ENCODE measurements at regions of chr1 and their contacts with region 1.

Region 1: DNA sequence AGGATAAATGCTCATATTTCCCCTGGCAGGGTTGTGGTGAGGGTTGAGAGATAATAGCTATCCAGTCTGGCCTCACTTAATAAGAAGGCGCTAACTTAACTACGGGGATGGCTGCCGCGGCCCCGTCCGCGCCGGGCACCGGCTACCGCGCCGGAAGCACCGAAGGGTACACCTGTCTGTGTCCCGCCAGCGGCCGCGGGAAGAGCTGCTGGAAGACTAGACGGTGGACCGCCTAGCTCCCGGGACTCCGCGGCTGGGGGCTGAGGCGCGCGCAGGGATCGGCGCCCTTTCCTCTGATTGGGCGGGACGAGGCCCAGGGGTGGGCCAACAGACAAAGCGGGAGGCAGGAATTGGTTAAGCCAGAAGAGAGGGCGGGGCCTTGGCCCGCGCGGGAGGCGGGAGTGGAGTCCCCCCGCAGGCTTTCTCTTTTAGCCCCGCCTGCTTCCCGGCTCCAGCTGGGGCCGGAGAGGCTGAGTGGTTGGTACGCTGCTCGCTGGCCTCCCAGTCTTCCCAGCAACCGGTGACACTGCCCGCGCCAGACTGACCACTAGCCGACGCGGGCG is at the start of gene ZNF672:
- DNase-seq: peak; percentile 93
- H3K4me3 Mint-ChIP-seq: no peak within 1 kb of the TSS
- H3K27ac Mint-ChIP-seq: peak within 1 kb of the TSS; percentile 90
- H3K4me1 Mint-ChIP-seq: peaks cover 21% of the 10 kb centered on the region
- H3K27me3 Mint-ChIP-seq: peaks cover 2% of the 10 kb centered on the region
- total RNA-seq, gene ZNF672: 46.0 and 51.6 TPM in 2 replicates

Region 2: DNA sequence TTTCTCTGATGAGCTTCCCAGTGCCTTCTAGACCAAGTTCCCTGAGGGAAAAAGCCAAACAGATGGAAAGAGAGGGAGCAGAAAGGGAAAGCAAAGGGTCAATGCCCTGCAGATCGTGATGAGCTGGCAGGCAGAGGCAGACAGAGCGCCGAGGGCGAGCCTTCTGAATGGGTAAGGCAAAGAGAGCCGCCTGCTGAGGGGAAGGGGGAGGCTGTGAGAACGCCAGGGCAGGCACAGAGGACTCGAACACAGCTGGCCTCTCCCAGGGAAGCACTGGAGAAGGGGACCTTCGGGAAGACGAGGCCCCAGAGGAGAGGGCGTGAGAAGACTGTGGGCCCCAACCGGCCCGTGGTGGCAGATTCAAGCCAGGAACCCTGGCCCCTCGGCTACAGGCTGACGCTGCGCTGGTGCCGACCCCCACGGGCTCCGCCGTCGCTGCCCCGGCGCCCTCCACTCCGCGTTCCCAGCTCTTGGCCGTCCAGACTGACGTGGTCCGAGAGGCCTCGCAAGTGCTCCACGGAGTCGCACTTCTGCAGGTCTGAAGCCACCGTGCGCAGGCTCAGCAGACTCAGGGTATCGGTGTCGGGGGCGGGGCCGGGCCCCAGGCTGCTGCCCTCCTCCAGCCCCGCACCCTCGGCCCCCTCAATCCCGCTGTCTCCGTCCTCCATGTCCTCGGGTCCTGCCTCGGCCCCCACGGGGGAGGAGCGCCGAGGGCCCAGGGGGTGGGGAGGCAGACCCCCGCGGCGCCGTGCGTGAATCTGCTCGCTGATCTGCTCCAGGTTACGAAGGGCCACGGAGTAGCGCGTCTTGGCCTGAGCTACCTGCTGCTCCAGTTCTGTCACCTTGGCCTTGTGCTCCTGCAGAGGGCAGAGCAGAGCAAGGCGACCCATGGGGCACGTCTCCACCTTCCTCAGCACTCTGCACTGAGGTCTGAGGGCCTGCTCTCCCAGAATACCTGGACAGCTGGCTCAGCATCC is 26.1 kb before region 1 on chr1:
- intact Hi-C with region 1: no loop called
- DNase-seq: no peak
- H3K4me3 Mint-ChIP-seq: no peak overlapping the region
- H3K27ac Mint-ChIP-seq: no peak overlapping the region
- H3K4me1 Mint-ChIP-seq: peaks cover 14% of the 10 kb centered on the region
- H3K27me3 Mint-ChIP-seq: no peaks in the 10 kb centered on the region

Region 3: DNA sequence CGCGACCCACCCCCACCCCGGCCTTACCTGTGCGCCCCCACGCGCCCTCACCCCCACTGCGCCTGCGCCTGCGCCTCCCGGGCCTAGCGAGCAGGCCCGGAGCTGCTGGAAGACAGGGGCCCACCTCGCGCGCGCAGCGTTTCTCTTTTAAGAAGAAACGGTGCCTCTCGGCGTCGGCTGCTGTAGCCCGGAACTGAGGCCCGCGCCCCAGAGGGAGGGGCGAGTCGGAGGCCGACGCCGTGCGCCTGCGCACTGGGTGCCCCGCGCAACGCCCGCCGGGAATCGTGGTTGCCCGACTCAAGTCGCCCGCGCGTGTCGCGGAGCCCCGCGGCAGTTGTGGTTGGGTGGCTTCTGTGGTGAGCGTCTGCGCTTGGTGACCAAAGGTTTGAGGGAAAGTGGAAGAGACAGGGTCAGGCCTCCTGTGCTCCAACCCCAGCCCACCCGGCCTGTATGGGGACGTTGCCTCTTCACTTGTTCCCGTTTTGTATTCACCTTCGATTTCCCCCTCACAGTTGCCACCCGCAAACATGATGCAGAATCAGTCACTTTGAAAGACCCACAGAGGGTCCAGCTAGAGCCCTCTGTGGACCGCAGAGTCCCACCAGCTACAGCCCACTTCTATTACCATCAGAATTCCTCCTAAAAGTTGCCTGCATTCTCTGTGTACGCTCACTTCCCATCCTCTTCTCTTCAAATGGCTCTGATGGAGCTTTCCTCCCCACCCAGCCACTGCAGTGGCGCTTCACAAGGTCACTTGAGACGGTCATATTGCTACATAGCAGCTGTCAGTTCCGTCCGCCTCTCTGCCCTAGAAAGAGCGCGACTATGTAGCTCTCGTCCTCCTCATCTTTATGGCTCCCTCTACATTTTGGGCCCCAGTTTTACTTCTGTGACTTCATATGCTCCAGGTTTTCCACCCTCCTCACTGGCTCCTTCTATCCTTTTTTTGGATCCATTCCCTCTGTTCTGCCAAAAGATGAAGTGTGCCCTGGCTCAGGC is 21.3 kb after region 1 on chr1 and contains the start of gene ZNF692:
- intact Hi-C with region 1: loop called (anchors 1 kb)
- DNase-seq: peak; percentile 96
- H3K4me3 Mint-ChIP-seq: peak within 1 kb of the TSS; percentile 93
- H3K27ac Mint-ChIP-seq: peak within 1 kb of the TSS; percentile 96
- H3K4me1 Mint-ChIP-seq: peaks cover 40% of the 10 kb centered on the region
- H3K27me3 Mint-ChIP-seq: no peaks in the 10 kb centered on the region
- total RNA-seq, gene ZNF692: 86.4 and 87.0 TPM in 2 replicates

Region 4: DNA sequence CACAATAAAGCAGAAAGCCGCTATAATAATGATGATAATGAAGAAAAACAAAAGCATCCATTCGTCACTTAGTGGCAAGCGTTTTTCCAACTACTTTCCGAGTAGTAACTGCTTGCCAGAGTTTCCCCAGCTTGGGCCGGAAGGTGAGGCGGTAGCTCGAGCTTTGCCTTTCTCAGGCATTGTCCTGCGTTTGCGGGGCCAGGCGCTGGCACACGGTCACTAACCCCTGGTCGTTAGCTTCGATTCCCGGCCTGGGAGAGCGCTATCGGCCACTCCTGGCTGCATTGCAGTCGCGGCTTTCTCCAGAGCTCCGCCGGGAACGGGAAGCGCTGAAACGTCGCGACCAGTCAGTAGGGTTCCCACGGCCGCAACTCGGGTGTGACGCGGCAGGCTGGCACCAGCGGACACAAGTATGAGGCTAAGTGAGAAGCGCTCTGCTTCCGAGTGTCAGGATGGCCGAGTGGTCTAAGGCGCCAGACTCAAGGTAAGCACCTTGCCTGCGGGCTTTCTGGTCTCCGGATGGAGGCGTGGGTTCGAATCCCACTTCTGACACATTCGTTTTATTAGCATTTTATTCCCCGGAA is 35.6 kb after region 1 on chr1:
- intact Hi-C with region 1: loop called (anchors 1 kb)
- DNase-seq: peak; percentile 91
- H3K4me3 Mint-ChIP-seq: peak overlapping the region; percentile 87
- H3K27ac Mint-ChIP-seq: peak overlapping the region; percentile 96
- H3K4me1 Mint-ChIP-seq: peaks cover 22% of the 10 kb centered on the region
- H3K27me3 Mint-ChIP-seq: peaks cover 17% of the 10 kb centered on the region

Region 5: DNA sequence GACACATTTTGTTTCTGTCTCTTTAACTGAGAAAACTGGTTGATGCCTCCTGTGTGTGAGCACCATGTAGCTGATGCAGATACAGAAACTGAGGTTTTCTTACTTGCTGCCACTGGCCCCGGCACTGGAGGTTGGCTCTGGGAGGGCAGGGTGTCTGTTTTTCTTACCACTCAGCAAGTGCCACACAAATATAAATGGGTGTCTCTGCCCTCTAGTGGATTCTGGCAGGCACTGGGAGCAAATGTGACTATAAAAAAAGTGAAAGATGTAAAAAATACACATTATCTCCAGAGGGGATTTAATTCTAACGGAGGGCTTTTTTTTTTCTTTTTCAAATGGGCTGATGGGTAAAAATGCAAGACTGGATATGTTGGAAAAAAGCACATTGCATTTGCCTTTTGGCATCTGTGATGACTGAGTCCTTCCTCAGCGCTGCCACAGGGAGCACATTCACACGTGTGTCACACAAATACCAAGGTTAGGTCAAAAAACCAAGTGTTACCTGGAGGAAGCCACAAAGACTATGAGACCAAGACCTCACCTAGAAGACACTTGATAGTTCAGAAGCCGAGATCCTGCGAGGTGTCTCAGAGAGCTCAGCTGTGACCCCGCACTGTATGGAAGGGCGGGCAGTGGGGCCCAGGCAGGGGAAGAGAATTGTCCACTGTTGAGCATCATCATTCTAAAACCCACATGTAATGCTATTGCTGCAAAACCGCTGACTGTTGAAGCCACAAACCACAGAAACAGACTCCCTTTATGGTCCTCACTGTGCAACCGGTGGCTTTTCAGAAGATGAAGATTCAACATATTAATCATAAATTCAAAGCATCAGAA is 87.0 kb after region 1 on chr1:
- intact Hi-C with region 1: no loop called
- DNase-seq: peak; percentile 54
- H3K4me3 Mint-ChIP-seq: peak overlapping the region; percentile 18
- H3K27ac Mint-ChIP-seq: peak overlapping the region; percentile 71
- H3K4me1 Mint-ChIP-seq: peaks cover 47% of the 10 kb centered on the region
- H3K27me3 Mint-ChIP-seq: no peaks in the 10 kb centered on the region